Activated CD4-positive, alpha-beta memory T cell treated with anti-CD3 and anti-CD28 coated beads, Interleukin-2, amount 10 ng/mL, durations not matched to agents 7 days and 5 days (primary cell): ENCODE measurements at regions of chr12 and their contacts with region 1.

Region 1: GRCh38 chr12:53352331-53353256 is 16.4 kb upstream of the SP7 start:
- DNase-seq: peak; percentile 87
- H3K4me3 Mint-ChIP-seq: no peak overlapping the region
- H3K27ac Mint-ChIP-seq: no peak overlapping the region
- H3K4me1 Mint-ChIP-seq: peaks cover 5% of the 10 kb centered on the region
- H3K27me3 Mint-ChIP-seq: no peaks in the 10 kb centered on the region

Region 2: DNA sequence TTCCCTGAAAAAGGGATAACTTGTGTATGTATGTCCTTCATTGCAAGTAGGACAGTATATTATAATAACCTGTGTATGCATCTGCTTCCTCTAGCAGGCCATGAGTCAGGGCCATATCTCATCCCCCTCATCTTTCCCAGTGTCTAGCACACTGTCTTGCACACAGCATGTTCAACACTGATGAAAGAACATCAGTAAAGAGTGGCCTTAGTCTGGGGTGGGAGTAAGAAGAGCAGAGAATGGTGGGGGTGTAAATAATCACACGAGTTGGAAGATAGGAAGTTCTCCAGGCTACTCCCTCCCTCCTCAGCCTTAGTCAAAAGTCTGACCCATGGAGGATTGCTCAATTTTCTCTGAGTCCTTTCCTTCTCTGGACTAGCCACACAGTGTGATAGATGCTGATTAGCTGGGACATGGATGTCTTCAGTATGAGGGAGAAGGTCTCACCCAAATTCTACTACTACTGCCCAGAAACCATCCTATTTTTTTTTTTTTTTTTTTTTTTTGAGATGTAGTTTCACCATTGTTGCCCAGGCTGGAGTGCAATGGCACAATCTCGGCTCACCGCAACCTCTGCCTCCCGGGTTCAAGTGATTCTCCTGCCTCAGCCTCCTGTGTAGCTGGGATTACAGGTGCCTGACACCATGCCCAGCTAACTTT is 12.8 kb after region 1 on chr12:
- CTCF ChIA-PET with region 1: interaction called, 10 read pairs
- POLR2A ChIA-PET with region 1: no interaction called
- DNase-seq: no peak
- H3K4me3 Mint-ChIP-seq: no peak overlapping the region
- H3K27ac Mint-ChIP-seq: peak overlapping the region; percentile 35
- H3K4me1 Mint-ChIP-seq: peaks cover 17% of the 10 kb centered on the region
- H3K27me3 Mint-ChIP-seq: no peaks in the 10 kb centered on the region

Region 3: DNA sequence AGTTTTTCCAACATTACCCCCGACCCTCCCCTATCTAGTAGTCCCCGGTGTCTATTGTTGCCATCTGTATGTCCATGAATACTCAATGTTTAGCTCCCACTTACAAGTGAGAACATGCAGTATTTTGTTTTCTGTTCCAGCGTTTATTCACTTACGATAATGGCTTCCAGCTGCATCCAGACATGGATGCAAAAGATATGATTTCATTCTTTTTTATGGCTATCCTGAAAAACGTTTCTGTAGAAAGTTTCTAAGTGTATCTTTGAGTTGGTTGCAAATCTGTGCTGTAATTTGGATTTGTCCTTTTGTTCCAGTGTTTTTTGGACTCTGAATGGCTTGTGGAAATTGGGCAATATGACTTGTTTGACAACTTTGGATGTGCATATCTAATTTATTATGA is 39.1 kb after region 1 on chr12:
- CTCF ChIA-PET with region 1: interaction called, 26 read pairs
- POLR2A ChIA-PET with region 1: interaction called, 5 read pairs
- DNase-seq: no peak
- H3K4me3 Mint-ChIP-seq: no peak overlapping the region
- H3K27ac Mint-ChIP-seq: no peak overlapping the region
- H3K4me1 Mint-ChIP-seq: peaks cover 38% of the 10 kb centered on the region
- H3K27me3 Mint-ChIP-seq: no peaks in the 10 kb centered on the region

Region 4: DNA sequence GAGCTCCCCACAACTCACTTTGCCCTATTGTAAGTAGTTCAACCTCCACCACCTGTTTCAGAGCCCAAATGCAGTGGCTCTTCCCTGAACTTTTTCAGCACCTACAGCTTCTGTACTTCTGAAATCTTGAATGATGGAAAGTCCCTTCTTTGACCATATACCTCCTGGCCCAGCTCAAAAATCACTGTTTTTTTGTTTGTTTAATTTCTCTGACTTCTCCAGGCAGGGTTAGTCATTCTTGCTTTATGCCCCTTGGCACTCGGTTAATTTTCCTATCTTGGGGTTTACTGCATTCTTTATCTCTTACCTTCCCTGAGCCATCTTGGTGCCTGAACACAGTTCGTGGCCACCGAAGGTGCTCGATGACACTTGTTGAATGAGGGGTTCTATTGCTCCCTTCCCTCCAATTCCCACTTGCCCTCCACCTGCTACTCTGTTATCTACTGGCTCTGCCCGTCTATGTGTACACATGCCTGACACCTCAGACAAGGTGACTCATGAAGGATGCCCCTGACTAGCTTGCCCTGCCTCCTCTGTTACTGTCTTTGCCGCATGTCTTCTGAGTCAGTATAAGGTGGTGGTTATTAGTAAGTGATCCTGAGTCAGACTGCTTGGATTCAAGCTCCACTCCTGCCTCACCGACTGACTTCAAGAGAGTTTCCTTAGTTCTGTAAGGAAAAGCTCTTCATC is 75.5 kb after region 1 on chr12:
- CTCF ChIA-PET with region 1: interaction called, 138 read pairs
- POLR2A ChIA-PET with region 1: interaction called, 4 read pairs
- DNase-seq: peak; percentile 30
- H3K4me3 Mint-ChIP-seq: no peak overlapping the region
- H3K27ac Mint-ChIP-seq: no peak overlapping the region
- H3K4me1 Mint-ChIP-seq: peaks cover 7% of the 10 kb centered on the region
- H3K27me3 Mint-ChIP-seq: no peaks in the 10 kb centered on the region

Region 5: DNA sequence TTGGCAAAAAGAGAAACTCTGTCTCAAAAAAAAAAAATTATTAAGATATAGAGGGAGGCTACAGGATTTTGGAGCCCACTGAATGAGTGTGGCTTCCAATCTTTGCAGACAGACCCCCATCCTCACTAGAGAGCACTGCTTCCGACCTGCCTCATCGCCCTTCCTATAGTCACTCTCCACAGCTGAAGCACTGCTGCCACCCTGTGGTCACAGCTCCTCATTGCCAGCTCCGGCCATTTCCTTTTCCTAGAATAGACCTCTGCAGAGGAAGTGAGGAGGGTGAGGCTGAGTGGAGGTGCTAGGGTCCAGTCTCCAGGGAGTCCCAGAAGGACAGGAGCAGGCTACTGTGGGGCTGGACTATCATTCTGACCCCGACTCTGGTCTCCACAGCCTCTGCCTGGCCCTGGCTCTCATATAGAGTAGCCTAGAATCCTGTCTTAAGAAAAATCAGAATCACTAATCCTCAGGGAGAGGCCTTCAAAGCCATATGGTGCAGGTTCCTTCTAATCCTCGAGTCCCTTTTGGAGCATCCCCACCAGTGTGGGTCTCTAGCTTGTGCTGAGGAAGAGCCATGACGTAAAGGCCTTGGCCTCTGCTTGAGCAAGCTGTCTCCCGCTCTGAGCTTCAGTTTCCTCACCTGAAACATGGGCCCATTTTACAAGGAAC is 156.1 kb after region 1 on chr12:
- CTCF ChIA-PET with region 1: interaction called, 33 read pairs
- POLR2A ChIA-PET with region 1: interaction called, 3 read pairs
- DNase-seq: peak; percentile 88
- H3K4me3 Mint-ChIP-seq: no peak overlapping the region
- H3K27ac Mint-ChIP-seq: peak overlapping the region; percentile 62
- H3K4me1 Mint-ChIP-seq: peaks cover 14% of the 10 kb centered on the region
- H3K27me3 Mint-ChIP-seq: no peaks in the 10 kb centered on the region